Right ventricle myocardium inferior (tissue), 1 donor: ENCODE measurements at regions of chr16 and their contacts with region 1.

Region 1: GRCh38 chr16:28873536-28874201 is 4.6 kb upstream of the ATP2A1 start:
- DNase-seq: peak; percentile 49
- ATAC-seq: peak; percentile 26

Region 2: GRCh38 chr16:28823872-28824716 is 49.6 kb before region 1 on chr16:
- intact Hi-C with region 1: loop called (anchors 5 kb)
- DNase-seq: peak; percentile 98
- ATAC-seq: peak; percentile 94